ENCODE measurements at regions of chr6 and their contacts with region 1.

Region 1: DNA sequence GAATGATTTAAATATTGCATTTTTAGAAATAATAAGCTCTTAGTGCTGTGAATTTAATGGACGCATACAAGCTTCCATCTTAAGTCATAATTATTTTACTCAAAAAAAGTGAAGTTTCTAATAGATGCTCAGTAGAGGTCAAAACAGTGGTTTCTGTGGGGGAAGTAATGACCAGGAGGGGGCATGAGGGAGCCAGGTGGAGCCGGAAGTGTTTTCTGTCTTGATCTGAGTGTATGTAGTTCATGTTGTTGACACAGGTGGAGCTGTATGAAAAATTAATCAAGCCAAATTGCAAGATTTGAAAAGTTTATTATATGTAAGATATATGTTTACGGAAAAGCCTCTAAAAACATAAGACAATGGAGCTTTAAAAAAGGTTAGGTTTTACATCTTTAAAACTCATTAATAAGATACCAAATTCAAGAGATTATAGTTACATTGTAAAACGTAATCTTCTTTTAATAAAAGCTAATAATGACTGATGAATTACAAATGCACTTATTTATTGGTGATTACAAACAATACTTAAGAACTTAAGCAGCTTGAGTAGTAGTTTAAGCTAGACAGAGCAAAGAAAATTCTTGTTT is 68.0 kb downstream of the PLAGL1 start:
- DNase-seq: peak; percentile 81
- CTCF ChIP-seq: peak; percentile 62

Region 2: GRCh38 chr6:143952947-143953701 is 13.0 kb after region 1 on chr6:
- CTCF ChIA-PET with region 1: interaction called, 12 read pairs
- POLR2A ChIA-PET with region 1: no interaction called
- DNase-seq: no peak
- CTCF ChIP-seq: no peak

Region 3: DNA sequence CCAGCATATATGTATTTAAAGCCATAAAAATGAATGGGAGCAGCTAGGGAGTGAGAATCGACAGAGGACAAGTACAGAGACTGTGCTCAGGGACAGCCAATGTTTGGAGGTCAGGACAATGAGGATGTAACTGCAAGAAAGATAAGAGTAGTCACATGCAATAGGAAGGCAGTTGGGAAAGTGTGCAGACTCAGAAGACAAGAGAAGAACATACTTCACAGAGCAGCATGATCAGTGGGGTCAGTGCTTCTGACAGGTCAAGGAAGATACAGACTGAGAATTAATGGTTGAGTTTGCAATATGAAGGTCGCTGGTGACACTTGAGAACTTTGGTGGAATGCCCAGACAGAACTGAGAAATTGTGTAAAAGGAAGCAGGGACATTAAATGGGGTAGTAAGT is 42.9 kb after region 1 on chr6:
- CTCF ChIA-PET with region 1: interaction called, 27 read pairs
- POLR2A ChIA-PET with region 1: no interaction called
- DNase-seq: no peak
- CTCF ChIP-seq: no peak

Region 4: GRCh38 chr6:144036064-144036834 is 96.1 kb after region 1 on chr6:
- CTCF ChIA-PET with region 1: interaction called, 15 read pairs
- POLR2A ChIA-PET with region 1: no interaction called
- DNase-seq: peak; percentile 48
- CTCF ChIP-seq: peak; percentile 11